GM23248 (cell line): ENCODE measurements at regions of chr20 and their contacts with region 1.

Region 1: DNA sequence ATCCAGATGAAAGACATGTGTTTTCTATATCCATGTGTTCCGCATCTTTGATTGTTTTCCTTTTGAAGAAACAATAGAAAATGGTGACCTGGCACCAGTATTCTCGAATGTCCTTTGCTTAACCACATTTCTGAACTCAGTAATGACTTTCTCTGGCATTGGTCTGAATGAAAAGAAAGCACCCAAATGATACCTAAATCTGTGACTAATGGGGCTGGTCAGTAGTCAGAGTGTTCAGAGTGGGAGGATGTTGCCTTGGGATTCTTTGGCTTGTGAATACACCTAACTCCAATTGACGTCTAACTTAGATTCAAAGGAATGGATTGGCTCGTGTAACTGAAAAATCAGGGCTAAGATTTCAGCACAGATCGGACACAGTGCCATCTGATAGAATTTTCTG is 27.1 kb downstream of the PARD6B start:
- DNase-seq: peak; percentile 77
- H3K4me3 ChIP-seq: no peak overlapping the region
- H3K27ac ChIP-seq: no peak overlapping the region
- H3K4me1 ChIP-seq: peaks cover 30% of the 10 kb centered on the region
- H3K27me3 ChIP-seq: no peaks in the 10 kb centered on the region

Region 2: DNA sequence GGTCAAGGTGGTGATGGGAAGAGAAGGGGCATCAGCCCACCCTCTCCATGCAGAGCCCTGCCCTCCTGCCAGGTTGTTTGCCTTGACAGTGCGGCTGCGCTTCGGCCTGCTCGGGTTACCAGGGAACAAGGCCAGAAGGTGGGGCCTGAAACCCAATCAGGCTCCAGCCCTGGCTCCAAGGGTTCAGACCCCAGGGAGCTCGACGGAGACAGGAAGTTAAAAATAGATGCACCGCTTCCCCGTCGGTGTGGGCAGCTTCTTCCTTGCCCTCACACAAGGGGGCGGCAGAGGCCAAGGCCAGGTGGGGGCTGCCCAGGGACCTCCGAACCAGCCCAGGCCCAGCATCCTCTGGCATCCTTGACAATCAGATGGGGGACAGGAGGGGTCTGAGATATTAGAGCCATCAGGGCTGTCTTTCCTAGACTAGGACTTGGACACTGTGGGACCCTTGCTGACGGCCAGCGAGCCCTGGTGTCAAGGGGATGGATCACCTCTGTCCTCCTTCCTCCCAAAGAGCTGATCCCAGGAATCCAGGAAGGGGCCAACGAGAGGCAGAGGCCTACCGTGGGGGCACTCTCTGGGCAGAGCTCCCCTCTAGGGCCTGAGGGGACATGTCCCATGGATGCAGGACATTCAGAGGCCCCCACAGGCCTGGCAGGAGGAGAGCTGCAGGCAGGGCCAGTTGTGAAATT is 132.3 kb before region 1 on chr20:
- in situ Hi-C with region 1: loop called (anchors 10 kb)
- DNase-seq: peak; percentile 56
- H3K4me3 ChIP-seq: no peak overlapping the region
- H3K27ac ChIP-seq: no peak overlapping the region
- H3K4me1 ChIP-seq: no peaks in the 10 kb centered on the region
- H3K27me3 ChIP-seq: no peaks in the 10 kb centered on the region